Left cardiac atrium (tissue), 4 donors: ENCODE measurements at regions of chr1 and their contacts with region 1.

Region 1: DNA sequence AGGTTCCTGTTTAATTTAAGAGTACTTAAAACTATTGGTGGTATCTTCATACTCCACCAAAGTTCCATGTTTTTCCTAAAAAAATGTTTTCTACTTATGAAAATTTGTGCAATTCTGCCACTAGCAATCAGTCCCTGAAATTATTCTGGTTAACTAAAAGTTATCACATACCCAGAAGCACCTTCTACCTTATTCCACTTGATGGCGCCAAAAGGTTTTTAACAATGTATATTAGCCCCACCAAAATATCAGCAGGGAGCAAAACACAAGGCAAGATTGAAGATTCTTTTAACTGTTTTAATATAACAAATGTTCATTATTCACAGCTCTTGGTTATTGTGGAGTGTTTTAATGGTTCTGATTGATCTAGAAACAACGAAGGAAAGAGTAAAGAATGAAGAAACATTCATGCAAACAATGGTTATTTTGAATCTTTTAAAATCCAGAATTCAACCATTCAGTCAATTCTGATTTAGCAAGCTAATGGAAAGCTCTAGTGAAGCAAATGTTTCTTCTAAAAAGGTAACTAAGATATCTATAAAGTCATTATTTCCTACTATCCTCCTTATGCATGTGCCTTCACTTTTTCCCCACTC is 67.2 kb downstream of the TTLL7 start:
- DNase-seq: no peak
- ATAC-seq: peak; percentile 68 to 72

Region 2: GRCh38 chr1:83626603-83627002 is 305.2 kb before region 1 on chr1:
- intact Hi-C with region 1: no loop called
- DNase-seq: no peak
- ATAC-seq: no peak

Region 3: DNA sequence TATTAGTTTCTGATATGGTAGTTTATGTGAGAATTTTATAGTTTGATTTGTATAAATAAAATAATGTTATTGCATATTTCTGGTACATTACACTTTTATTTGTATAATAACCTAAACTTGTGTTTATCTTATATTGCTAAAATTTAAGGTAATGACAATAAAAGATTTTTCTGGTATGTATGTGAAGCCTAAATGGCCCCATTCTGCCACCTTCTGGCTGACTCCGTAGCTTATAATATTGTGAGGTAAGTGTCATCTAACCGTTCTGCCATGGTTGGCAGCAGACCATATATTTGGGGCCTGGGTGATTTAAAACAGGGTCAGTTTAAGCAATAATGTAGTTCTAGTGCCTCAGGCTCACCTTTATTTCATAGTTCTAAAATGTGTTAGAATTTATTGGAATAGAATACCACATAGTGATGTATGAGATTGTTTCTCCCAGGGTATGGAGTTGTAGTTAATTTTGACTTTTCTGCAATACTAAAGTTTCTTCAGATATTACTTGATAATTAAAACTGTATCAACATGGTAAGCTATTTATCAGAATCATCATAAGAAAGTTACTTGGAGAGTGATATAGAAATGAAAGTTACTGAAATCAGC is 191.1 kb after region 1 on chr1:
- intact Hi-C with region 1: loop called in 1 of 2 experiments (anchors 2 kb)
- DNase-seq: peak; percentile 44
- ATAC-seq: peak; percentile 55 to 71

Region 4: DNA sequence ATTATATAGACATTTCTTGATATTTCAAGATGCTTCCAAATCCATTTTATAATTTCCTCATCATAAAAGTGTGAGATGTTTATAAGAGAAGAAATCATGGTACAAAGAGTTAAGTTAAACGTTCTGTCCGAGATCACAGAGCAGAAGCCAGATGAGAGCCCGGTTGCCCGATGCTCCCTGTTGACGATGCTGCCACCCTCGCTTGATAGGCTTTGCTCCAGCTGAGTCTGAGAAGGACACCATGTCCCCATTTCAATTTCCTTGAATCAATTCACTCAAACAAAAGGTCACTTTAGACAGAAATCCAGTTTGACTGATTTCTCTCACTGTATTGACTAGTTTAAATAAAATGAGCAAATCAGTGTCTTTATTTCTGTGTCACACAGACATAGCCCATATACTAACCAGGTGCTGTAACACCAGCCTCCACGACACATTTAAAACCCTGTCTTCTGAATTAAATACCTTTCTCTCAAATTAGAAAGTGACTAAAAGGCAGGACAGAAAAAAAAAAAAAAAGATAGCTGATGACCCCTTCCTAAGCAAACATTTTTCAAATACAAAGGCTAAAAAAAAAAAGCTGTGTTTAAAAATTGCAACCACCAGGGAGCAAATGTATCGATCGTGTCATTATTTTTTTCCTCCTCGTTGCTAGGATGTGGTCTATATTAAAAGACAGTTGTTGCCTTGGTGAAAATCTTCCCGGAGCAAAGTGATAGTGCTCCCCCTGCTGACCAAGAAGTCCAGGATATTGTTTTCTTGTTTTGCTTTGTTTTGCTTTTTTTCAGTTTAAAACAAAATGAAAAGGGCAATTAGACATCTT is 501.7 kb after region 1 on chr1:
- intact Hi-C with region 1: loop called (anchors 2 to 10 kb)
- DNase-seq: peak; percentile 31
- ATAC-seq: peak; percentile 75 to 82

Region 5: DNA sequence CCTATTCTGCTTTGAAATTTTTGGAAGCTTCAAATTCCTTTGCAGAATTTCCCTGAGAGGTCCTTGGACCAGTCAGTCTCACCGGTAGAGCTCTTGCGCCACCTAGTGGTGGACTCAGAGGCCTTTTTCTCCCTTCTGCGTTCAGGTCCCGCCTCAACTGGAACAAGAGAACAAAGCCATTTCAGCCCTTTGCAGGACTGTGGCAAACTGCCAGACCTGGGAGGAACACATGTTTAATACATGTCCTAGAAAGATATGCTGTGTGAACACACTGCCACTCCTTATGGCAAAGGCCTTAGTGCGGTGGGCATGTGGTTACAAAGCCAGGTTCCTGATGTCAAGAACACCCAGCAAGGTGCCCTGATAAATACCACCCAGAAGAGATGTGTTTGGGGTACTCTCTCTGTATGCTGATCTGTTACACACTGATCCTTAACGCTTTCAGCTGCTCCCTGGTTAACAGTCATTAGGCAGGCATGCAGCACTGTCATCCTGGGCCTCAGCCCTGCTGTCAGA is 840.7 kb after region 1 on chr1:
- intact Hi-C with region 1: loop called in 1 of 2 experiments (anchors 10 kb)
- DNase-seq: peak; percentile 85
- ATAC-seq: peak; percentile 87 to 89